Right lobe of liver (tissue), 6 donors: ENCODE measurements at regions of chr7 and their contacts with region 1.

Region 1: DNA sequence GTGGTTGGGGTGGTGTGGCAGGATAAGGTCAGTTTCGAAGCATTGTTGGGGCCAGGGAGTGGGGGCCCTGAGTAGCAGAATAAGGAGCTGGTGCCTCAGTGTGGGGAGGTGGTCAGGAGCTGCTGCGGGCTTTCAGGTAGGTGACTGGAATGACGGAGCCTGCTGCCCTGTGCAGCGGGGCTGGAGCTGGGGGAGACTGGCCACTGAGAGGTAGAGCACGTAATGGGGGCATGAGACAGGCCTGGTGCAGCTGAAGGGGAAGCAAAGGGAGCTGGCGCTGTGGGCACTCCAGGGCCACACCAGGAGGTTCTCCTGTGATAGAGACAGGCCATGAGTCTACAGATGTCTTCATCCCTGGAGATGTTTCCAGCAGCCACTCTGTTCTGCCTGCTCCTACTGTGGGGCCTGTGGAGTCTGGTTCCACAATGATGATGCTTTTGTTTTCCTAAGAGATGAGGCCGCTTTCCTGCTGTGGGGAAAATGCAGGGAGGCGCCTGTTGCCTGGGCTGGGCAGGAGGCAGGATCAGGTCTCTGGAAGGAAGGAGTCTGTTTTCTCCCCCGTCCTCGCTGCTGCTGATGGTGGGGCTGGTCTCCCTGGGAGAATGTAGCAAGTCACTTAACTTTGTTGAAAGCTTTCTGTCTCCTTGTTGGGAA is 31.1 kb downstream of the NUB1 start:
- DNase-seq: peak in 1 of 3 donors; percentile 5
- ATAC-seq: no peak
- H3K4me3 ChIP-seq: no peak overlapping the region
- H3K27ac ChIP-seq: no peak overlapping the region
- H3K4me1 ChIP-seq: peaks cover 0 to 4% (median 0%) of the 10 kb centered on the region in 4 donors
- H3K27me3 ChIP-seq: no peaks in the 10 kb centered on the region
- CTCF ChIP-seq: no peak
- POLR2A ChIP-seq: no peak

Region 2: GRCh38 chr7:151448261-151449252 is 75.8 kb after region 1 on chr7:
- intact Hi-C with region 1: loop called (anchors 5 kb)
- DNase-seq: peak; percentile 68 to 74 (median 70)
- ATAC-seq: peak; percentile 89 to 94 (median 92)
- H3K4me3 ChIP-seq: peak overlapping the region; percentile 34 to 57 (median 57)
- H3K27ac ChIP-seq: no peak overlapping the region
- H3K4me1 ChIP-seq: no peaks in the 10 kb centered on the region
- H3K27me3 ChIP-seq: no peaks in the 10 kb centered on the region
- CTCF ChIP-seq: peak; percentile 77 to 87 (median 82)
- POLR2A ChIP-seq: no peak